Gastrocnemius medialis (tissue), 4 donors: ENCODE measurements at regions of chr1 and their contacts with region 1.

Region 1: GRCh38 chr1:101410048-101410878 is 173.4 kb downstream of the S1PR1 start:
- DNase-seq: no peak
- ATAC-seq: no peak
- H3K4me3 ChIP-seq: no peak overlapping the region
- H3K27ac ChIP-seq: no peak overlapping the region
- H3K4me1 ChIP-seq: no peaks in the 10 kb centered on the region
- H3K27me3 ChIP-seq: no peaks in the 10 kb centered on the region
- CTCF ChIP-seq: no peak
- POLR2A ChIP-seq: no peak

Region 2: GRCh38 chr1:101309334-101310311 is 100.6 kb before region 1 on chr1:
- in situ Hi-C with region 1: no loop called
- intact Hi-C with region 1: no loop called
- DNase-seq: peak; percentile 18 to 19
- ATAC-seq: peak; percentile 58 to 73
- H3K4me3 ChIP-seq: peak overlapping the region; percentile 38 to 63 (median 52)
- H3K27ac ChIP-seq: no peak overlapping the region
- H3K4me1 ChIP-seq: peaks cover 5 to 7% of the 10 kb centered on the region in 2 donors
- H3K27me3 ChIP-seq: peaks cover 0 to 7% (median 0%) of the 10 kb centered on the region in 3 donors
- CTCF ChIP-seq: peak; percentile 28 to 81 (median 54)
- POLR2A ChIP-seq: no peak

Region 3: DNA sequence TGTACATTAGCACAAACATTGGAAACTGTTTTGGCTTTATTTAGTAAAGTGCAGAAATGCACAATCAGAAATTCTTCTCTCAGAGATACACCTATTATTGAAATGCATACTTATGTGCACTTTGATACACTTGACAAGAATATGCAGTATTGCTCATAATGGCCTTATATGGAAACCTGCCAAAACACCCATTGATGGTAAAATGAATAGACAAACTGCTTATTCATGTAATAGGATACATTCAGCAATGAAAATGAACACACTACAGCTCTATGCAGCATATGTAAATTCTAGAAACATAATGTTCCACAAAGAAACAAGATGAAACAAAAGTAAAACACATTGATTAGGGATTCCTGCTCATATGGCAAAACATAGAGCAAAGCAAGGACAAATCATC is 50.5 kb after region 1 on chr1:
- in situ Hi-C with region 1: loop called in 1 of 4 experiments (anchors 5 kb)
- intact Hi-C with region 1: no loop called
- DNase-seq: no peak
- ATAC-seq: no peak
- H3K4me3 ChIP-seq: no peak overlapping the region
- H3K27ac ChIP-seq: no peak overlapping the region
- H3K4me1 ChIP-seq: no peaks in the 10 kb centered on the region
- H3K27me3 ChIP-seq: no peaks in the 10 kb centered on the region
- CTCF ChIP-seq: no peak
- POLR2A ChIP-seq: no peak